Posterior vena cava (tissue), 2 donors: ENCODE measurements at regions of chr22 and their contacts with region 1.

Region 1: GRCh38 chr22:45994491-45995404 is 17.8 kb upstream of the WNT7B start:
- DNase-seq: peak; percentile 95

Region 2: DNA sequence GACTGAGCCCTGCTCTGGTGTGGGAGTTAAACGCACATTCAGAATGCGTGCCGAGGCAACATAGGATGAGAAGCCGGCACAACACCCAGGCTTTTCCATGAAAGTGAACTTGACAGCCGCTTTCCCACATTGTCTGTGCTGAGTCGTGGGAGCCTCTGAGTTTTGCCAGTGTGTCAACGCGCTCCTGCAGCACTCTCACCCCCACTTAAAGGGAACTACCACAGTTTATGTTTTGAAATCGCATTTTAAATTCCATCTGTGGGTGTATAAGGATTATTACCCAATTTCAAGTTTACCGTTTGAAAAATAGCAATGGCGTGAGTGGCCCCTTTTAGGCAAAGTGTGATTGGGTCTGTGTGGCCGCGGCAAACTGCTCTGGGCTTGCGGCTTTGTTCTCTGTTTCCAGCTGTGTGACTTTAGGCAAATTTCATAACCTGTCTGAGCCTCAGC is 410.6 kb before region 1 on chr22:
- intact Hi-C with region 1: loop called in 1 of 2 experiments (anchors 2 kb)
- DNase-seq: no peak

Region 3: GRCh38 chr22:45934659-45935341 is 59.9 kb before region 1 on chr22:
- intact Hi-C with region 1: no loop called
- DNase-seq: no peak

Region 4: DNA sequence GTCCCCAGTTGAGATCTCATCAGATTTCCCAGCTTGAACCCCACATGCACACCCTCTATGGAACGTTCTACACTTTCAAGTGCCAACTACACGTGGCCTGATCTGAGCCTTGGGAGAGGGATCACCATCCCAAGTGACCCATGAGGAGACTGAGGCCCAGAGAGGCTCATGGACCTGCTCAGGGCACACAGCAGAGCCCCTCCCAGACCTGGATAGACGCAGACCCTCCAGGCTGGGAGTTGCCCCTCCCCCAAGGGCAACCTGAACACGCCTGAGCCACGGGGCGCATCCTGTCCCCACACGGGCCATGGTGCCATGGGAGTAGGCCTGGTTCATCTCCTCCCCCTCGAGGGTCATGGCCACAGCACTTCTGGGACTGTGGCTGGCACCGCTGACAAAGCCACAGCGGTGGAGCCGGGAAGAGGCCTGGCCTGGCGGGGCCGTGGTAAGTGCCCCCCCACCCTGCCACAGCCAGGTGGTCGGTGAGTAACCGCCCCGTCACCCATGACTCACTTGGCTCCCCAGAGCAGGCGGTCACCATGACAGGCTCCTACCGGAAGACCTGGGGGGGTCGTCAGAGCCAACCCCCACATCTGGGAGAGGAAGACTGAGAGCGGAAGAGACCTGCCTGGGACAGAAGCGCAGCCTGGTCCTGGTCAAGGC is 25.9 kb before region 1 on chr22:
- intact Hi-C with region 1: no loop called
- DNase-seq: no peak

Region 5: GRCh38 chr22:46574966-46575910 is 580.5 kb after region 1 on chr22:
- intact Hi-C with region 1: no loop called
- DNase-seq: peak; percentile 80